MCF 10A (cell line): ENCODE measurements at regions of chr13 and their contacts with region 1.

Region 1: DNA sequence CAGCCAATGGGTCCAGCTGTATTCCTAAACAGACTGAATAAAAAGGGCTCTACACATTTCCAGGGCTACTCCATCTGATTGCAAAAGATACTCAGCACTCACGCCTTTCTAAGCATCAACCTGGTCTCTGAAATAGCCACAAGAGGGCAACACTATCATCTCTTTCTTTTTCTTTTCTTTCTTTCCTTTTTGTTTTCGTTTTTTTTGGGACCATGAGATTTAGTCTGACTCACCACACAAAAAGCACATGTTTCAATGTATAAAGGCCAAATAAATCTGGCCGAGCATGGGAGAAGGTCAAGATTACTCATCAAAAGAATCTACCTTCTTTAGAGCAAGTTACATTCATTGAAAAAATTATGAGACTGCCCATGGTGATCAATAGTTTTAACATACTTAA is 805.6 kb upstream of the ARGLU1 start:
- DNase-seq: peak; percentile 78
- H3K4me3 Mint-ChIP-seq: no peak overlapping the region
- H3K27ac Mint-ChIP-seq: no peak overlapping the region
- H3K4me1 Mint-ChIP-seq: no peaks in the 10 kb centered on the region
- H3K27me3 Mint-ChIP-seq: no peaks in the 10 kb centered on the region
- CTCF ChIP-seq: peak; percentile 33

Region 2: DNA sequence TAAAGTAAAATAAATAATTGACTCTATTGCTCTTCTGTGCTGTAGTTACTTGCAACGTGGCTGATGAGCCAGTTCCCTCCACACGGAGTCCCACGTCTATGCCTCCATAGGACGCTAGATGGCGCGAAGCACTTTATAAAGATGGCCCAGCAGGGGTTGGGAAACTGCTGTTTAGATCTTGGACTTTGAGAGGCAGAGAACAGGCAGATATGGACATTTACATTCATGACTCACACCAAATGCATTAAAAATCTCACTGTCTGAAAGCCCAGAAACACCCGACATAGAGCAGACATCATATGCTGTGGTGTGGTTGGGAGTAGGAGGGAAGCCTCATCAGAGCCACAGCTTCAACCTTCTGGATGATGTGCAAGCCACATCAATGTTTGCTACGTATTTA is 162.5 kb before region 1 on chr13:
- CTCF ChIA-PET with region 1: interaction called, 9 read pairs
- POLR2A ChIA-PET with region 1: no interaction called
- intact Hi-C with region 1: loop called (anchors 1 kb)
- DNase-seq: peak; percentile 89
- H3K4me3 Mint-ChIP-seq: no peak overlapping the region
- H3K27ac Mint-ChIP-seq: no peak overlapping the region
- H3K4me1 Mint-ChIP-seq: peaks cover 5% of the 10 kb centered on the region
- H3K27me3 Mint-ChIP-seq: peaks cover 20% of the 10 kb centered on the region
- CTCF ChIP-seq: peak; percentile 87

Region 3: DNA sequence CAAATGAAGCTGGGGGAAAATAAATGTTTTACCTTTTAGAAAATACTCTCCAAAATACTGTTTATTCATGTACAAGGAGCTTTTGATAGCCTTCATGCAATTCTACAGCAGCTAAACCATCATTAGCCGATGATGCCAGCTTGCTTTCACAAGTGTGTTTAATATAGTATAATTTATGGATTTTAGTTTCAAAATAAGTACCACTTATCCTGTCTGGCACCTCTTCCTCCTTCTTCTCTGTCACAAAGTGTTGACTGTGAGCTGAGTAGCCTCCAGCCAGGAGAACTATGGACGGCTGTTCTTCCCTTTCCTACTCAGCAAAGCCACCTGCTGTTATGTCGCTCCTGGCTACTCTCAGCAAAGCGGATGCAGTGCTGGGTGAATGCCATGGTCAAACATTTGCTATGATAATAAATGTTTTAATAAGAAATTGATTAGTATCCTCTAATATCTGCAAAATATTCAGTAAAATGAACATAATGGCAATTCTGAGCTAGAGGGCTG is 603.6 kb after region 1 on chr13:
- CTCF ChIA-PET with region 1: no interaction called
- POLR2A ChIA-PET with region 1: no interaction called
- intact Hi-C with region 1: no loop called
- DNase-seq: no peak
- H3K4me3 Mint-ChIP-seq: no peak overlapping the region
- H3K27ac Mint-ChIP-seq: no peak overlapping the region
- H3K4me1 Mint-ChIP-seq: no peaks in the 10 kb centered on the region
- H3K27me3 Mint-ChIP-seq: no peaks in the 10 kb centered on the region
- CTCF ChIP-seq: no peak